T-cell (primary cell): ENCODE measurements at regions of chr1 and their contacts with region 1.

Region 1: GRCh38 chr1:207848234-207848633 is 62.7 kb downstream of the CD34 start:
- DNase-seq: peak in 2 of 35 experiments; percentile 22 to 44
- ATAC-seq: peak; percentile 46 to 67 (median 60)
- H3K4me3 ChIP-seq: no peak overlapping the region
- H3K4me3 Mint-ChIP-seq: peak overlapping the region; percentile 37 to 55 (median 38)
- H3K27ac ChIP-seq: no peak overlapping the region
- H3K27ac Mint-ChIP-seq: peak overlapping the region; percentile 68 to 79
- H3K4me1 ChIP-seq: peaks cover 6 to 62% of the 10 kb centered on the region in 2 experiments
- H3K4me1 Mint-ChIP-seq: peaks cover 93 to 97% (median 97%) of the 10 kb centered on the region in 3 donors
- H3K27me3 ChIP-seq: no peaks in the 10 kb centered on the region
- H3K27me3 Mint-ChIP-seq: no peaks in the 10 kb centered on the region

Region 2: GRCh38 chr1:207612762-207613161 is 235.5 kb before region 1 on chr1:
- CTCF ChIA-PET with region 1: no interaction called
- POLR2A ChIA-PET with region 1: no interaction called
- DNase-seq: no peak
- ATAC-seq: no peak
- H3K4me3 ChIP-seq: no peak overlapping the region
- H3K4me3 Mint-ChIP-seq: no peak overlapping the region
- H3K27ac ChIP-seq: no peak overlapping the region
- H3K27ac Mint-ChIP-seq: no peak overlapping the region
- H3K4me1 ChIP-seq: no peaks in the 10 kb centered on the region
- H3K4me1 Mint-ChIP-seq: no peaks in the 10 kb centered on the region
- H3K27me3 ChIP-seq: peaks cover 0 to 9% of the 10 kb centered on the region in 2 experiments
- H3K27me3 Mint-ChIP-seq: peaks cover 4 to 10% of the 10 kb centered on the region in 2 donors

Region 3: GRCh38 chr1:207740224-207740623 is 108.0 kb before region 1 on chr1:
- CTCF ChIA-PET with region 1: interaction called in 1 of 2 experiments, 11 read pairs
- POLR2A ChIA-PET with region 1: no interaction called
- DNase-seq: no peak
- ATAC-seq: no peak
- H3K4me3 ChIP-seq: no peak overlapping the region
- H3K4me3 Mint-ChIP-seq: no peak overlapping the region
- H3K27ac ChIP-seq: no peak overlapping the region
- H3K27ac Mint-ChIP-seq: no peak overlapping the region
- H3K4me1 ChIP-seq: no peaks in the 10 kb centered on the region
- H3K4me1 Mint-ChIP-seq: peaks cover 9 to 15% (median 10%) of the 10 kb centered on the region in 3 donors
- H3K27me3 ChIP-seq: peaks cover 0 to 3% of the 10 kb centered on the region in 2 experiments
- H3K27me3 Mint-ChIP-seq: no peaks in the 10 kb centered on the region